Activated CD4-positive, alpha-beta T cell treated with anti-CD3 and anti-CD28 coated beads, Interleukin-2, amount 10 ng/mL, durations not matched to agents 24 days and 14 days (primary cell): ENCODE measurements at regions of chr11 and their contacts with region 1.

Region 1: GRCh38 chr11:34105079-34105956 is at the start of gene NAT10:
- DNase-seq: peak; percentile 99
- H3K4me3 Mint-ChIP-seq: peak within 1 kb of the TSS; percentile 97
- H3K27ac Mint-ChIP-seq: peak within 1 kb of the TSS; percentile 90
- H3K4me1 Mint-ChIP-seq: peaks cover 47% of the 10 kb centered on the region
- H3K27me3 Mint-ChIP-seq: peaks cover 3% of the 10 kb centered on the region
- total RNA-seq, gene NAT10: 162 and 169 TPM in 2 replicates

Region 2: GRCh38 chr11:33344611-33345010 is 760.7 kb before region 1 on chr11:
- intact Hi-C with region 1: no loop called
- DNase-seq: no peak
- H3K4me3 Mint-ChIP-seq: no peak overlapping the region
- H3K27ac Mint-ChIP-seq: no peak overlapping the region
- H3K4me1 Mint-ChIP-seq: peaks cover 3% of the 10 kb centered on the region
- H3K27me3 Mint-ChIP-seq: no peaks in the 10 kb centered on the region

Region 3: GRCh38 chr11:33996498-33997454 is 108.5 kb before region 1 on chr11:
- intact Hi-C with region 1: loop called (anchors 1 kb)
- DNase-seq: peak; percentile 93
- H3K4me3 Mint-ChIP-seq: peak overlapping the region; percentile 30
- H3K27ac Mint-ChIP-seq: no peak overlapping the region
- H3K4me1 Mint-ChIP-seq: peaks cover 8% of the 10 kb centered on the region
- H3K27me3 Mint-ChIP-seq: peaks cover 29% of the 10 kb centered on the region